Mucosa of descending colon (tissue), 3 donors: ENCODE measurements at regions of chr14 and their contacts with region 1.

Region 1: GRCh38 chr14:104078031-104078455 is 7.5 kb upstream of the ASPG start:
- DNase-seq: peak; percentile 90 to 91 (median 90)
- ATAC-seq: peak; percentile 88
- H3K4me3 ChIP-seq: no peak overlapping the region
- H3K4me1 ChIP-seq: peaks cover 27% of the 10 kb centered on the region
- CTCF ChIP-seq: peak; percentile 100

Region 2: GRCh38 chr14:104130974-104131651 is 53.1 kb after region 1 on chr14:
- intact Hi-C with region 1: loop called in 1 of 2 experiments (anchors 5 kb)
- DNase-seq: peak; percentile 48 to 76 (median 74)
- ATAC-seq: peak; percentile 85
- H3K4me3 ChIP-seq: no peak overlapping the region
- H3K4me1 ChIP-seq: peaks cover 10% of the 10 kb centered on the region
- CTCF ChIP-seq: peak; percentile 62

Region 3: DNA sequence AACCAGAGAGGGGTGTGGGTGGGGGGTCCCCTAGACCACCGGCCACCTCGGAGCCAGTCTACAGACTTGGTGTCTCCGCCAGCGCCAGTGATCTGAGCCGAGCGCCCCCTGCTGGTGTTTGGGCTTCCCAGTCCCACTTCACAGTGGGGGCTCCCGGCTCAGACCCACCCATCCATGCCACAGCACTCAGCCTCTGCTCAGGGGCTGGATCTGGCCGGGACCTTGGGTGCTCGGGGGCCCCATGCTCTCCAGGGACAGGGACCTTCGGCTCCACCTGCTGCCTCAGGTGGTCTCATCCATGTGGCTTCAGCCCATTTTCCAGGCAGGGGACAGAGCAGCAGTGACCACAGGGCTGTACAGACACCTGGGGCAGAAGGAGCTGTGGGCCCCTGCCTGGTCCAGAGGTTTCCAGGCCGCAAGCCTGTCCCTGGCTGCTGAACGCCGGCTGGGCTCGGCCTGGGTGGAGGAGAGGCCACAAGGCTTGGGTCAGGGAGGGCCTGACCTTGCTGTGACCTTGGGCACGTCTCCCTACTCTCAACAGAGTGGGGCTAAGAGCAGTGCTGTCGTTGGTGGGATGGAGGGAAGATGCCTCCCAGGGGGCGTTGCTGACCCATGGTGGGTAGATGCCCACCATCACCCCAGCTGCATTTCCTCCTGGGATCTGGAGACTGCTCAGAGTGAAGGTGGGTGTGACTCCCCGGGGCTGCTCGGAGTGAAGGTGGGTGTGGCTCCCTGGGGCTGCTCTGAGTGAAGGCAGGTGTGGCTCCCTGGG is 146.6 kb after region 1 on chr14:
- intact Hi-C with region 1: no loop called
- DNase-seq: peak; percentile 65 to 83 (median 82)
- ATAC-seq: peak; percentile 29
- H3K4me3 ChIP-seq: no peak overlapping the region
- H3K4me1 ChIP-seq: peaks cover 39% of the 10 kb centered on the region
- CTCF ChIP-seq: peak; percentile 35

Region 4: DNA sequence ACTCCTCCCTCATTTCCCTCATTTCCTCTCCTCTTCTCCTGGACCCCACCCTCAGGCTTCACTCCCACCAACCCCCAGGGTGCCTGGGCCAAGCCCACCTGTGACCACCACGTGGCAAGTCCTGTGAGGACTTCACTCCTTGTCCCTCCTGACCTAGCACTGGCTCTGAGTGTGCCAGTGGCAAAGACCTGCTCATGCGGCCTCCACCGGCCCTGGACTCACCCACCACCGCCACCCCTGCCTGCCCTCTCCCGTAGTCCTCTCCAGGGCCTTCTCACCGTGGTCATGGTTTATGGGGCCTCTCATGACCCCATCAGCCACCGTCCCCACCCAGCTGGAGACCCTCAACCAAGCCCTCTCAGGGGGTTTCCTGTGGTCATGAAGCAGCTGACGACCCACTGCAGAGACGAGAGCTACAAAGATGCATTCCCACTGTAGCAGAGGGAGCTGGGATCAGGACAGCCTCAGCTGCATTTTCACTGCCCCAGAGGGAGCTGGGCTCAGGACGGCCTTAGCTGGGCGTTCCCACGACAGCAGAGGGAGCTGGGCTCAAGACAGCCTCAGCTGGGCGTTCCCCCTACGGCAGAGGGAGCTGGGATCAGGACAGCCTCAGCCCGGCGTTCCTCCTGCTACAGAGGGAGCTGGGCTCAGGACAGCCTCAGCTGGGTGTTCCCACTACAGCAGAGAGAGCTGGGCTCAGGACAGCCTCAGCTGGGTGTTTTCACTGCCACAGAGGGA is 498.4 kb after region 1 on chr14:
- intact Hi-C with region 1: loop called in 1 of 2 experiments (anchors 10 kb)
- DNase-seq: peak; percentile 43 to 67 (median 65)
- ATAC-seq: peak; percentile 74
- H3K4me3 ChIP-seq: no peak overlapping the region
- H3K4me1 ChIP-seq: peaks cover 23% of the 10 kb centered on the region
- CTCF ChIP-seq: no peak

Region 5: GRCh38 chr14:104650057-104650981 is 572.3 kb after region 1 on chr14:
- intact Hi-C with region 1: no loop called
- DNase-seq: peak in 2 of 3 donors; percentile 79 to 82
- ATAC-seq: peak; percentile 93
- H3K4me3 ChIP-seq: no peak overlapping the region
- H3K4me1 ChIP-seq: peaks cover 6% of the 10 kb centered on the region
- CTCF ChIP-seq: peak; percentile 94